Endothelial cell of umbilical vein (primary cell): ENCODE measurements at regions of chr12 and their contacts with region 1.

Region 1: GRCh38 chr12:49636979-49637755 is 13.8 kb downstream of the PRPF40B start:
- DNase-seq: peak; percentile 76
- H3K4me3 ChIP-seq: no peak overlapping the region
- H3K27ac ChIP-seq: peak overlapping the region; percentile 48
- H3K4me1 ChIP-seq: peaks cover 12% of the 10 kb centered on the region
- H3K27me3 ChIP-seq: no peaks in the 10 kb centered on the region
- CTCF ChIP-seq: peak; percentile 73 to 76
- POLR2A ChIP-seq: no peak

Region 2: GRCh38 chr12:49623142-49623904 is 13.8 kb before region 1 on chr12 and contains the start of gene PRPF40B:
- CTCF ChIA-PET with region 1: interaction called, 32 read pairs
- POLR2A ChIA-PET with region 1: no interaction called
- dilution Hi-C with region 1: no loop called
- intact Hi-C with region 1: no loop called
- DNase-seq: peak; percentile 75
- H3K4me3 ChIP-seq: peak within 1 kb of the TSS; percentile 23 to 68 (median 36)
- H3K27ac ChIP-seq: no peak within 1 kb of the TSS
- H3K4me1 ChIP-seq: peaks cover 21% of the 10 kb centered on the region
- H3K27me3 ChIP-seq: peaks cover 4 to 10% of the 10 kb centered on the region in 2 experiments
- CTCF ChIP-seq: peak; percentile 42 to 66
- POLR2A ChIP-seq: peak; percentile 84
- total RNA-seq, gene PRPF40B: 9.5 and 9.9 TPM in 2 replicates

Region 3: DNA sequence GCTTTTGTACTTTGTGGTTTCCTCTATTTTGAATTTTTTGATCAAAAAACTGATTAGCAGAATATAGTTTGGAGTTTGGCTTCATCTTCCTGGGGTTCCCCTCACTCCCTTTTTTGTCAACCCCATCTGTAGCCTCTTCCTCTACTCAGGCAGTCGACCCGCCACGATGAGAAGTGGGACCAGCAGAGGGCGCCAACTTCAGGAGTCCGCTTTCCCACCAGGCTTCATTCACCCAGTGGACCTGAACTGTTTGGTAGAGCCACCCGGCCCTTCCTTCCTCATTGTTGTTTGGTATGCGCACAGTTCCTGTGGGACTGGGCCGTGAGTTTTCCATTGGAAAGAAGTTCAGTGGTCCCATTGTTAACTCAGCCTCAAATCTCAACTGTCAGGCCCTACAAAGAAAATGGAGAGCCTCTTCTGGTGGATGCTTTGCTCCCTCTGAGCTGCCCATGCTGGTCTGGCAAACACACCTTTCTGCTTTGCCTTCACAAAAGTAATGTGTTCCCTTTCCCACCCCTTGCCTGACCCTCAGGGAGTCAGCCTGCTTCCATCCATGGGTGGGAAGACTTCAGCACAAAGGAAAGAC is 125.9 kb after region 1 on chr12:
- CTCF ChIA-PET with region 1: interaction called, 15 read pairs
- POLR2A ChIA-PET with region 1: no interaction called
- dilution Hi-C with region 1: no loop called
- intact Hi-C with region 1: no loop called
- DNase-seq: peak; percentile 75
- H3K4me3 ChIP-seq: no peak overlapping the region
- H3K27ac ChIP-seq: peak overlapping the region; percentile 22
- H3K4me1 ChIP-seq: peaks cover 19% of the 10 kb centered on the region
- H3K27me3 ChIP-seq: no peaks in the 10 kb centered on the region
- CTCF ChIP-seq: peak; percentile 86 to 92
- POLR2A ChIP-seq: no peak

Region 4: GRCh38 chr12:49828133-49829091 is 191.2 kb after region 1 on chr12 and contains the start of gene NCKAP5L:
- CTCF ChIA-PET with region 1: no interaction called
- POLR2A ChIA-PET with region 1: no interaction called
- dilution Hi-C with region 1: no loop called
- intact Hi-C with region 1: loop called (anchors 5 kb)
- DNase-seq: peak; percentile 97
- H3K4me3 ChIP-seq: peak within 1 kb of the TSS; percentile 58 to 76 (median 72)
- H3K27ac ChIP-seq: peak within 1 kb of the TSS; percentile 52
- H3K4me1 ChIP-seq: peaks cover 35% of the 10 kb centered on the region
- H3K27me3 ChIP-seq: no peaks in the 10 kb centered on the region
- CTCF ChIP-seq: no peak
- POLR2A ChIP-seq: peak; percentile 75
- total RNA-seq, gene NCKAP5L: 46.1 and 52.1 TPM in 2 replicates

Region 5: DNA sequence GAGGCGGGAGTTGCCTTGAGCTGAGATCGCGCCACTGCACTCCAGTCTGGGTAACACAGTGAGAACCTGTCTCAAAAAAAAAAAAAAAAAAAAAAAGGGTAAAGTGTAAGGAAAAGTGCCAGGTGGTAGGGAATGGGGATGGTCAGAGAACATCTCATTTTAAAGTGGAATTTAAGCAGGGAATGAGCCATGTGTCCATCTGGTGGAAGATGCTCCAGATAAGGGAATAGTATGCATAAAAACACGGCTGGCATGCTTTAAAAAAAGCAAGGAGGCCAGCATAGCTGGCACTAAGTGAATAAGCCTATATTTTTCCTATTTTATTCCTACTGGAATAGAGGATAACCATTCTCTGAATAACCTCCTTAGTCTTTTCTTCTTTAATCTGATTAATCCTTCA is 725.5 kb after region 1 on chr12:
- CTCF ChIA-PET with region 1: no interaction called
- POLR2A ChIA-PET with region 1: no interaction called
- dilution Hi-C with region 1: no loop called
- intact Hi-C with region 1: no loop called
- DNase-seq: no peak
- H3K4me3 ChIP-seq: no peak overlapping the region
- H3K27ac ChIP-seq: no peak overlapping the region
- H3K4me1 ChIP-seq: no peaks in the 10 kb centered on the region
- H3K27me3 ChIP-seq: no peaks in the 10 kb centered on the region
- CTCF ChIP-seq: no peak
- POLR2A ChIP-seq: no peak